Colonic mucosa (tissue), 4 donors: ENCODE measurements at regions of chr22 and their contacts with region 1.

Region 1: GRCh38 chr22:17785185-17786184 is 11.2 kb upstream of the BID start:
- DNase-seq: peak; percentile 84
- H3K4me3 ChIP-seq: no peak overlapping the region
- H3K27ac ChIP-seq: no peak overlapping the region
- H3K4me1 ChIP-seq: peaks cover 11% of the 10 kb centered on the region
- H3K27me3 ChIP-seq: no peaks in the 10 kb centered on the region
- CTCF ChIP-seq: peak; percentile 70

Region 2: DNA sequence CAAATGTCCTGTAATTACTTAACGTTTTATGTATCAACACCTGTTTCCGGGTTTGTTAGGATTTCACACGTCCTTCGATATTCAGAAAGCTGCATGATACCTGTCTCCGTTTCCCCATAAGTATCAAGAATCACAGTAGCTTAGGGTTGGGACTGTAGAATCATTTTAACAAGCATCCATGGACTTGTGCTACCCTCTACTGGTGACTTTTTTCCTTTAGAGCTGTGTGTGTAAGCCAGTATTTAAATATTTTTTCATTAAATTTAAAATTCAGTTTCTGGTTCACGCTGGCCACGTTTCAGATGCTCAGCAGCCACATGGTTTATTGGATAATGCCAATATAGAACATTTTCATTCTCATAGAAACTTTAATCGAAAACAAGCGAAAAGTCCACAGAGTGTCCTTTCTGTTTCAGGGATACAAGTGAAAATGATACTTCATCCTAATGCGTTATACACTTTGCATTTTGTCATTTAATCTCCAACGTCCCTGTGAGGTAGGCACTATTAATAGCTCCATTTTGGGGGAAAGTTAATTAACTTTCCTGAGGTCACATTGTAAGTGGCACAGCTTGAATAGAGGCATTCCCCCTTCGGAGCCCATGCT is 283.7 kb before region 1 on chr22:
- intact Hi-C with region 1: no loop called
- DNase-seq: peak; percentile 29
- H3K4me3 ChIP-seq: no peak overlapping the region
- H3K27ac ChIP-seq: no peak overlapping the region
- H3K4me1 ChIP-seq: no peaks in the 10 kb centered on the region
- H3K27me3 ChIP-seq: no peaks in the 10 kb centered on the region
- CTCF ChIP-seq: peak; percentile 43

Region 3: GRCh38 chr22:17717708-17718107 is 67.8 kb before region 1 on chr22:
- intact Hi-C with region 1: no loop called
- DNase-seq: no peak
- H3K4me3 ChIP-seq: no peak overlapping the region
- H3K27ac ChIP-seq: no peak overlapping the region
- H3K4me1 ChIP-seq: no peaks in the 10 kb centered on the region
- H3K27me3 ChIP-seq: no peaks in the 10 kb centered on the region
- CTCF ChIP-seq: no peak

Region 4: DNA sequence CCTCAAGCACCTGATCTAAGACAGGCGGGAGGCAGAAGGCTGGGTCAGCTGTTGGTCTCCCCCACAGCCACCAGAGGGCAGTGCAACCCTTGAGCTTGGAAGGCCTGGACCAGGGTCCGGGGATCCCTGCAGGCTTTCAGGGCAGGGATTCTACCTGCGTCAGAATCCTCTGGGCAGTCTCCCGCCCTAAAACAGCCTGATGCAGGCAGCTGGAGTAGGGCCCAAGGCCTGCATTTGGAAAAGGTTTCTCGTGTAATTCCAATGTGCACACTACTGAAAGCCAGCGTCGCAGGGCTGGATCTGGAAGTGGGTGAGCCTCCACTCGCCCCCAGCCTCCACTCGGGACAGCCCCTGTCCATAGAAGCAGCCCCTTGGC is 43.0 kb before region 1 on chr22:
- intact Hi-C with region 1: loop called (anchors 5 kb)
- DNase-seq: peak; percentile 74
- H3K4me3 ChIP-seq: no peak overlapping the region
- H3K27ac ChIP-seq: no peak overlapping the region
- H3K4me1 ChIP-seq: no peaks in the 10 kb centered on the region
- H3K27me3 ChIP-seq: no peaks in the 10 kb centered on the region
- CTCF ChIP-seq: peak; percentile 78